ENCODE measurements at regions of chr6 and their contacts with region 1.

Region 1: GRCh38 chr6:159042003-159042825 is 2.6 kb downstream of the TAGAP start:
- DNase-seq: peak; percentile 77 to 92
- H3K4me3 ChIP-seq: peak overlapping the region in 3 of 4 donors; percentile 22 to 39 (median 35)
- H3K27ac ChIP-seq: peak overlapping the region in 3 of 5 donors; percentile 42 to 80 (median 79)
- H3K4me1 ChIP-seq: peaks cover 0 to 47% (median 9%) of the 10 kb centered on the region in 4 donors
- H3K27me3 ChIP-seq: no peaks in the 10 kb centered on the region
- CTCF ChIP-seq: peak in 5 of 7 experiments; percentile 81 to 92 (median 92)
- EP300 ChIP-seq: no peak
- POLR2A ChIP-seq: no peak

Region 2: DNA sequence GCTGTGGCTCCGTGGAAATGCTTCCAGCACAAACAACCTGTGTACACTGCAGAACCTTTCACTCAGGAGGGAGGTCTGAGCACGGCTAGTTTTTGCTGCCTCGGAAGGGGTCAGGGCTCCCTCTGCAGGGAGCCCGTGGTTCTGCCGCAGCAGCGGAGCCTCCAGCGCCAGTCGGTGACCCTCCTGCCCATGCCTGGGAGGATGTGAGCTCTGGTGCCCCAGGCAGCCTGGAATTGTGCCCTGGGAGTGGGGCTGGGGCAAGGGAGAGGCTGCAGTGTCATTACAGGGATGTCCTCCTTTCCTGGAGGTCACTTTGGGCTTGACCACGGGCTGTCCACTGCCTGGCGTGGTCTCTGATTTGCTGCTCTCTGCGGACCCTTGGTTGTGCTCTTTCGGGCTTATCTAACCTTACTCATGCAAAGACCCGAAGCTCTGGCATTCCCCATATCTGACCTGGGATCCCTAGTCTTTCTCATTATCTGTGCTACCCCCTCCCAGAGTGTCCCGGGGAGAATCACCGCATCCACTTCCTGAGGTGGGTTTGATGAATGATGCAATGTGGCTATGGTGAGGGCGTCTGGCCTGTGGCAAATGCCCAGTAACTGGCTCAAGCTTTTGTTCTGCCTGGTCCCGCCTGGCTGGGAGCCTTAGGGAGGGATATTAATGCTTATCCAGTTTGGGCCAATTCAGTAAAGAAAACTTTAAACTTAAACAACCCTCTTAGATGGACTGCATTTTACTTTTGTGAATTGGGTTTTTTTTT is 62.1 kb after region 1 on chr6:
- intact Hi-C with region 1: loop called (anchors 10 kb)
- DNase-seq: peak; percentile 76 to 86
- H3K4me3 ChIP-seq: no peak overlapping the region
- H3K27ac ChIP-seq: peak overlapping the region in 1 of 5 donors; percentile 31
- H3K4me1 ChIP-seq: peaks cover 16 to 47% (median 34%) of the 10 kb centered on the region in 4 donors
- H3K27me3 ChIP-seq: peaks cover 0 to 11% (median 0%) of the 10 kb centered on the region in 3 donors
- CTCF ChIP-seq: peak in 5 of 7 experiments; percentile 73 to 85 (median 80)
- EP300 ChIP-seq: no peak
- POLR2A ChIP-seq: no peak

Region 3: DNA sequence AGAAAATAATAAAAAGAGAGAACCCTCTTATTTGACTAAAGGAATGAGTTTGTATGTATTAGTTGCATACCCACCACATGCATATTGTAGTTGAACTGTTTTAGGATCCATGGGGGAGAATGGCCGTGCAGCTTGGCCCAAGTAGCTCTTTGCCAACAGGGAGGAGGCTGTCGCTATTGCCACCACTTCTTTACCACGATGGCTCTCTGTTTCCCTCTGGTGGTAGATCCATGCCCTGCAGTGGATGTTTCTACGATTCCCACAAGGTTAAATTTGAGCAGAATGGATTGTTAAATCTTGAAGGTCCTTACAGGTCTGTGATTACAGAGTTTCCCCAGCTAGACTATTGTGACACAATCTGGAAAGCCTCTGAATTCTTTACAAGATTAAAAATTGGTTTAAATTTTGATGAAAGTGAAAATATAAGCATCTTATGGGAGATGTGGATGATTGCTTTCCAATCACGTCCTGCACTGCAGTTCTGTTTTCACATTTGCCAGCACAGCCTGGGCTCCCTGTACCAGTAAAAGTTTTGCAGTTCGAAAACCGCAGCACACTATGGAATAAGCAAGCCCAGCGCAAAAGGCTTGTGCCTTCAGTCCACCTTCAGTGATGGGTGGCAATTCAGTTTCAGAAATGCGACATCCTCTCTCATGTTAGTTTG is 92.6 kb after region 1 on chr6:
- intact Hi-C with region 1: no loop called
- DNase-seq: peak; percentile 80 to 86
- H3K4me3 ChIP-seq: no peak overlapping the region
- H3K27ac ChIP-seq: no peak overlapping the region
- H3K4me1 ChIP-seq: no peaks in the 10 kb centered on the region
- H3K27me3 ChIP-seq: peaks cover 0 to 23% (median 0%) of the 10 kb centered on the region in 3 donors
- CTCF ChIP-seq: peak in 5 of 7 experiments; percentile 82 to 93 (median 89)
- EP300 ChIP-seq: no peak
- POLR2A ChIP-seq: no peak

Region 4: DNA sequence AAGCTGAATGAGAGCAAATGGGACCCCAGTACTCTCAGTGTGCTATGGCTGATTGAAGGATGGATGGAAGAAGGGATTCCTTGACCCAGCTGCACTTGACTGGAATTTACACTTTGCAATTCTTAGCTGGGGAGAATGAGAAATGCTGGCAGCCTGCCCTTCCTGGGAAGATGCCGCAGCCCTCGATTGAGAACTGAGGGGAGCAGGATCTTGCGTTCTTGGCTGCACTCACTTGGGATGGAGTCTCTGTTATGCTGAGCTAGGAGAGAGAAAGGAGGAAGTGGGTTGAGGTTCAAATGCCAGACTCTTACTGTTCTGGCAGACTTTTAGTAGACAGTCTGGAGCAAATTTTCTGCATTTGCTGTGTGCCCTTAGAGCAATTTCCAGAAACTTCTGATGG is 348.2 kb after region 1 on chr6:
- intact Hi-C with region 1: no loop called
- DNase-seq: peak in 1 of 2 donors; percentile 45
- H3K4me3 ChIP-seq: no peak overlapping the region
- H3K27ac ChIP-seq: no peak overlapping the region
- H3K4me1 ChIP-seq: peaks cover 0 to 8% (median 0%) of the 10 kb centered on the region in 4 donors
- H3K27me3 ChIP-seq: no peaks in the 10 kb centered on the region
- CTCF ChIP-seq: no peak
- EP300 ChIP-seq: no peak
- POLR2A ChIP-seq: no peak

Measured in stomach (tissue), 19 donors.